ENCODE measurements at regions of chr2 and their contacts with region 1.

Region 1: DNA sequence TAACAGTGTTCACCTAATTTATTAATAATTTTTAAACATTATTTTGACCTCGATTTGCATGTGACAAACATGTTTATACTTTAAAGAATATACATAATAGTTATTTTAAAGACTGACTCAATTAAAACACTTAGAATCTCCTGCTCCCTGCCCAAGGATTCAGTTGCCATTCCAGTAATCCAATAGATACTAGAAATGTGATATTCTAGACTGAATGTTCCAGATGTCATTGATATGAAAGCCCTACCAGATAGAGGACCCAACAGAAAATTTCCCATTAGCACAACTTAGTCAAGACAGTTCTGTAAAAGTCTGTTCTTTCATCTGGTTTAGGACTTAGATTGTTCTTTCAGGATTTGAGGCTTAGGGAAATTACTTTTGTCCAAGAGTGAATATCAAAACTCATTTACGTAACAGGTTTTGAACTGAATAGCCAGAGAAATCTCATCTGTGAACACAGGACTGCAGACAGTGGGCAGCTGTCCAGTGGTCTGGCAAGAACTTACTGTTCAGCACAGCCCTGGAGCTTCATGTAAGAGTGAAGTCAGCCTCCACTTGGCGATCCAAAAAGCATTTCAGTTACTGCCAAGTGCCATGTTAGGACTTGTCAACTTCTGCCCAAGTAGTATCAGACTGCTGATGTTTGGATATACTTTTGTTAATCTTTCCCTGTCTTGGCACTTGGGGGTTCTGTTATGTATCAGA is 77.5 kb downstream of the OSBPL6 start:
- DNase-seq: peak; percentile 91
- H3K4me3 Mint-ChIP-seq: peak overlapping the region; percentile 35
- H3K27ac Mint-ChIP-seq: peak overlapping the region; percentile 77
- H3K4me1 Mint-ChIP-seq: peaks cover 32% of the 10 kb centered on the region
- H3K27me3 Mint-ChIP-seq: no peaks in the 10 kb centered on the region
- CTCF ChIP-seq: no peak

Region 2: GRCh38 chr2:178241844-178242551 is 29.8 kb before region 1 on chr2:
- CTCF ChIA-PET with region 1: interaction called, 6 read pairs
- POLR2A ChIA-PET with region 1: interaction called, 17 read pairs
- intact Hi-C with region 1: no loop called
- DNase-seq: peak; percentile 96
- H3K4me3 Mint-ChIP-seq: peak overlapping the region; percentile 6
- H3K27ac Mint-ChIP-seq: peak overlapping the region; percentile 75
- H3K4me1 Mint-ChIP-seq: peaks cover 48% of the 10 kb centered on the region
- H3K27me3 Mint-ChIP-seq: no peaks in the 10 kb centered on the region
- CTCF ChIP-seq: no peak

Region 3: DNA sequence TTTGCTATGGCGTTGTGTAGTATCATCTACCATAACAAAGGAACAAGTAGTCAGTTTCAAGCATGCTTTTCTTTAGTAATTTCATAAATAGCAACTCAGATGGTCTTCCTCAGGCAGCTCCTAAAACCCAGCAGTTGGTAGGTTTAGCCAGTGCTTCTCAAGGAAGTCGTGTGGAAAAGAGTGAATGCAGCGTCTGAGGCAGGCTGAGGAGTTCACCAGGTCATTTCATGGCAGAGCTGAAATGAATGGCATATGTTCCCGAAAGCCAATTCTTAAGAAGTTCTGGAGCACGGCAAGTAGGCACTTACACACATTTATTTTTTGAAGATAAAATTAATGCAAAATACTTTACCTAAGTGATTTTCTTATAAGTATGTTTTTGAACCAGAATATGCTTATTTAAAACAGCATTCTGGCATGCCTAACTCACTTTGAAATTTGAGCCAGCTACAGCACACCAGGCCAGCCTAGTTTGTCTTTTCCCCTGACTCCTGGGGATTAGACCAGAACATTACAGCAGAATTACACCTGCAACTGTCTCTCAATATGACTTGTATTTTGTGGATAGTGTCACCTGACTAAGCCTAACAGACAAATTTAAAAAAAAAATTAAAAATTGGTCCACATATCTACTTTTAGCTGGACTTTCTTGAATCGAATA is 15.3 kb before region 1 on chr2:
- CTCF ChIA-PET with region 1: no interaction called
- POLR2A ChIA-PET with region 1: interaction called, 24 read pairs
- intact Hi-C with region 1: no loop called
- DNase-seq: no peak
- H3K4me3 Mint-ChIP-seq: no peak overlapping the region
- H3K27ac Mint-ChIP-seq: no peak overlapping the region
- H3K4me1 Mint-ChIP-seq: peaks cover 15% of the 10 kb centered on the region
- H3K27me3 Mint-ChIP-seq: no peaks in the 10 kb centered on the region
- CTCF ChIP-seq: no peak

Region 4: GRCh38 chr2:178298785-178299212 is 27.0 kb after region 1 on chr2:
- CTCF ChIA-PET with region 1: interaction called, 3 read pairs
- POLR2A ChIA-PET with region 1: interaction called, 51 read pairs
- intact Hi-C with region 1: no loop called
- DNase-seq: peak; percentile 94
- H3K4me3 Mint-ChIP-seq: peak overlapping the region; percentile 62
- H3K27ac Mint-ChIP-seq: peak overlapping the region; percentile 89
- H3K4me1 Mint-ChIP-seq: peaks cover 22% of the 10 kb centered on the region
- H3K27me3 Mint-ChIP-seq: no peaks in the 10 kb centered on the region
- CTCF ChIP-seq: no peak

Measured in MCF 10A (cell line).